Common myeloid progenitor, CD34-positive (primary cell): ENCODE measurements at regions of chr5 and their contacts with region 1.

Region 1: DNA sequence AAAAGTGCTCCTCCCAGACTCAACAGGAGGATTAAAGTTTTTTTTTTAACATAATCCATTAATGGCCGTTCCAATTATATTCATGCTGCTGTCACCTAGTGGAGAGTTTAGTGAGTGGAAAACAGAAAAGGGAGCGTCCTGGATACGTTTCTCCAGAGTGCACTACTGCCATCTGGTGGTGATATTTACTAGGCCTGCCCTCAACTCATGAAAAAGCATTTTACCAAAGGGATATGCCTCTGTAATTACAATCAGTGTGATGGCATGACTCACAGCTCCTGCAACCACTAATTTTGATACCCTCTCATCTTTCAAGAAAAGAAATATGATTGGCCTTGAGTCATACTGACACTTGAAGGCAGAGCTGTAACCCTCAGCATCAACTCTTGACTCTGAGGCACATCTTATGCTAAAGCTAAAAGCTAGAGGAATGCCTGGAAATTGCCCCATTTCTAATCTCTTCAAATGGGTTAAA is 20.0 kb downstream of the MINAR2 start:
- DNase-seq: peak; percentile 92 to 95 (median 93)
- H3K4me3 ChIP-seq: no peak overlapping the region
- H3K27ac ChIP-seq: no peak overlapping the region
- H3K4me1 ChIP-seq: peaks cover 0 to 2% (median 0%) of the 10 kb centered on the region in 4 experiments
- H3K27me3 ChIP-seq: peaks cover 0 to 2% (median 0%) of the 10 kb centered on the region in 5 experiments

Region 2: DNA sequence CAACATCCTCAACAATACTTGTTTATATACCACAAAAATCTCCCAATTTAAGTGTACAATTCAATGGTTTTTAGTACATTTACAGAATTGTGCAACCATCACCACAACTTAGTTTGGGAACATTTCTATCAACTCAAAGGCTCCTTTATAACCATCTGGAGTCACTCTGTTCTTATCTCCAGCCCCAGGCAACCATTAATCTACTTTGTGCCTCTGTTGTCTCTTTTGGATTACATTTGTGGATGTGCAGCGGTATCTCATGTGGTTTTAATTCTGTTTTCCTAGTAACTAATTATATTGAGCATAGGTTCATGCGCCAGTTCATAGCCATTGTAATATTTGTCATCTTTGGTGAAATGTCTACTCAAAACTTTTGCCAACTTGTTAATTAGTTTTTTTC is 293.4 kb before region 1 on chr5:
- CTCF ChIA-PET with region 1: no interaction called
- POLR2A ChIA-PET with region 1: no interaction called
- DNase-seq: no peak
- H3K4me3 ChIP-seq: no peak overlapping the region
- H3K27ac ChIP-seq: no peak overlapping the region
- H3K4me1 ChIP-seq: no peaks in the 10 kb centered on the region
- H3K27me3 ChIP-seq: no peaks in the 10 kb centered on the region

Region 3: DNA sequence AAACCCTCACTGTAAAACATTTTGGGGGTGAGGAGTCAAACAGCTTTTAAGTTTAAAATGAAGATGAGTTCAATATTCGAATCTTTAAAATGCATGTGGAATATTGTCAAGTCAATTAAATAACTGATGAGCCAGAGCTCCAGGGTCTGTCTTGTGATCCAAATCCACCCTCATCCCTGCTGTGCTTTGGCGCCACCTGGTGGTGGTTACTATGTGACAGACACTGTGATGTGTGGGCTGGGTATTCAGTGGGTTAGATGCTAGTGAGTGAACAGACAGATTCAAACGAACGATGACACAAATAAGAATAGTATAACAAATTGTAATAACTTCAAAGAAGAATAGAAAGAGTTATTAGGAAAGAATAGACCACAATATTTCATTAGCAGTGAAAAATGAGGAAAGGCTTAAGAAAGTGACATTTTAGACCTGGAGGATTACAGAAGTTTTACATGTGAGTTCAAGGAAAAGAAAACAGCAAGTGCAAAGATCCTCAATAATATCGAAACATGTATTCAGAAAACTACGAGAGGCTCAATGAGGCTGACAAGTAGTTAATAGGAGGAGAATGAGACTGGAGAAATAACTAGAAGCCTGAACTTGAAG is 84.9 kb after region 1 on chr5:
- CTCF ChIA-PET with region 1: interaction called, 62 read pairs
- POLR2A ChIA-PET with region 1: no interaction called
- DNase-seq: peak; percentile 45 to 78 (median 69)
- H3K4me3 ChIP-seq: no peak overlapping the region
- H3K27ac ChIP-seq: no peak overlapping the region
- H3K4me1 ChIP-seq: peaks cover 0 to 5% (median 0%) of the 10 kb centered on the region in 4 experiments
- H3K27me3 ChIP-seq: no peaks in the 10 kb centered on the region